ENCODE measurements at regions of chr12 and their contacts with region 1.

Region 1: DNA sequence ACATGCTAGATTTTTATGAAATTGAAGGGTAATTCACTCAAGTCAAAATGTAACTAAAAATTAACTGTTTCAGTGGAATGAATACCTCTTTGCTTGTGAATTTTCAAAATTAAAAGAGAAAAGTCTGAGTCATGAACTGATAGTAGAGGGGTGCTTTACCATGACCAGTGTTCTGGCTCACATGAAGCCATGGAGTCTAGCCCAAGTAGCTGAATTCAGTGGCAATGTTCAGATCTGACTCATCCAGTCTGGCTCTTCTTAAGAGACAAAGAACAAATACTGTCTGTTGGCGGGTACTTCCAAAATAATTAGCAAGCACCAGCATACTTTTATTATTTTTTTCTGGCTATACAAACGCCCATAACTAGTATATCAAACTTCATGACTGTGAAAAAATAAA is 366.3 kb upstream of the GARIN6 start:
- DNase-seq: no peak
- H3K4me3 ChIP-seq: no peak overlapping the region
- H3K27ac ChIP-seq: peak overlapping the region; percentile 77
- H3K4me1 ChIP-seq: peaks cover 38% of the 10 kb centered on the region
- CTCF ChIP-seq: no peak

Region 2: GRCh38 chr12:99271071-99271470 is 10.2 kb before region 1 on chr12:
- CTCF ChIA-PET with region 1: no interaction called
- POLR2A ChIA-PET with region 1: interaction called, 14 read pairs
- intact Hi-C with region 1: no loop called
- DNase-seq: no peak
- H3K4me3 ChIP-seq: no peak overlapping the region
- H3K27ac ChIP-seq: no peak overlapping the region
- H3K4me1 ChIP-seq: no peaks in the 10 kb centered on the region
- CTCF ChIP-seq: no peak

Measured in OCI-LY7 (cell line).